Activated CD4-positive, alpha-beta T cell treated with anti-CD3 and anti-CD28 coated beads for 36 hours (primary cell): ENCODE measurements at regions of chr14 and their contacts with region 1.

Region 1: GRCh38 chr14:81801921-81802320 is 268.3 kb upstream of the SEL1L start:
- DNase-seq: no peak
- ATAC-seq: no peak
- H3K4me3 Mint-ChIP-seq: no peak overlapping the region
- H3K27ac Mint-ChIP-seq: no peak overlapping the region
- H3K4me1 Mint-ChIP-seq: no peaks in the 10 kb centered on the region
- H3K27me3 Mint-ChIP-seq: no peaks in the 10 kb centered on the region

Region 2: GRCh38 chr14:79986251-79986650 is 1815.7 kb before region 1 on chr14:
- CTCF ChIA-PET with region 1: no interaction called
- POLR2A ChIA-PET with region 1: no interaction called
- intact Hi-C with region 1: loop called in 1 of 2 experiments (anchors 5 kb)
- DNase-seq: no peak
- ATAC-seq: no peak
- H3K4me3 Mint-ChIP-seq: no peak overlapping the region
- H3K27ac Mint-ChIP-seq: no peak overlapping the region
- H3K4me1 Mint-ChIP-seq: no peaks in the 10 kb centered on the region
- H3K27me3 Mint-ChIP-seq: no peaks in the 10 kb centered on the region

Region 3: GRCh38 chr14:81890020-81890419 is 88.1 kb after region 1 on chr14:
- CTCF ChIA-PET with region 1: no interaction called
- POLR2A ChIA-PET with region 1: no interaction called
- intact Hi-C with region 1: no loop called
- DNase-seq: no peak
- ATAC-seq: no peak
- H3K4me3 Mint-ChIP-seq: no peak overlapping the region
- H3K27ac Mint-ChIP-seq: no peak overlapping the region
- H3K4me1 Mint-ChIP-seq: no peaks in the 10 kb centered on the region
- H3K27me3 Mint-ChIP-seq: no peaks in the 10 kb centered on the region

Region 4: GRCh38 chr14:81940651-81941050 is 138.7 kb after region 1 on chr14:
- CTCF ChIA-PET with region 1: no interaction called
- POLR2A ChIA-PET with region 1: no interaction called
- intact Hi-C with region 1: no loop called
- DNase-seq: no peak
- ATAC-seq: no peak
- H3K4me3 Mint-ChIP-seq: no peak overlapping the region
- H3K27ac Mint-ChIP-seq: no peak overlapping the region
- H3K4me1 Mint-ChIP-seq: no peaks in the 10 kb centered on the region
- H3K27me3 Mint-ChIP-seq: no peaks in the 10 kb centered on the region

Region 5: GRCh38 chr14:82159624-82160023 is 357.7 kb after region 1 on chr14:
- CTCF ChIA-PET with region 1: no interaction called
- POLR2A ChIA-PET with region 1: no interaction called
- intact Hi-C with region 1: no loop called
- DNase-seq: no peak
- ATAC-seq: no peak
- H3K4me3 Mint-ChIP-seq: no peak overlapping the region
- H3K27ac Mint-ChIP-seq: no peak overlapping the region
- H3K4me1 Mint-ChIP-seq: no peaks in the 10 kb centered on the region
- H3K27me3 Mint-ChIP-seq: no peaks in the 10 kb centered on the region